ENCODE measurements at regions of chr22 and their contacts with region 1.

Region 1: GRCh38 chr22:23281406-23282088 is 101.2 kb downstream of the BCR start:
- DNase-seq: peak; percentile 91 to 97
- ATAC-seq: peak; percentile 90
- H3K4me3 ChIP-seq: no peak overlapping the region
- H3K27ac ChIP-seq: peak overlapping the region in 1 of 2 donors; percentile 85
- H3K4me1 ChIP-seq: no peaks in the 10 kb centered on the region
- H3K27me3 ChIP-seq: no peaks in the 10 kb centered on the region

Region 2: DNA sequence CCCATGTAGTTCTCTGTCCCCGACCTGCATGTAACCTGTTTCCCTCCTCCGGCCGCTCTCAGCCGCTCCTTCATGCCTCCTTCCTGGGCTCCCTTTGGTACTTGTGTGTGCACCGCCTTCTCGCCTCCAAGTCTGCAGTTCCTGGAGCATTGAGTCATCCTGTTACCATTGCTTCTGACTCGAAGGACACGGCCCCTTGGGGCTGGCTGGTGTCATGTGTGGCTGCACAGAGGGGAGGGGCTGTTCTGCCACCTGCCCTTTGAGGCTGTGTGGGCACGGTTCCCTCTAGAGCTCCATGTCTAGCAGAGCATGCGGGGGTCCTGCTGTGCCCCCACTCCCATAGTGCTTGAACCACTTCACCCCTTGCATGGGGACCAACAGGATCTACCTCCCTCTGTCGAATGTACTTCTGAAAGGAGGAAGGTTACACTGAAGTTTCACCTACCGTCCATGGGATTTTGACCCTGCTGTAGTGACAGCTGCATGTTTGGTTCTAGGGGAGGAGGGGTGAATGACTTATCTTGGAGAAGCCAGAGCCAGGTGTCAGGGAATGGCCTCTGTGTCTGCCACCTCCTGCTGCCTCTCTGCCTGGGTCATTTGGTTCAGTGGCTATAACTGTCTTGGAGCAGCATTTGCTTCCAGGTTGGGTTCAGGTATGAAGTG is 61.6 kb before region 1 on chr22:
- intact Hi-C with region 1: no loop called
- DNase-seq: peak; percentile 75 to 83
- ATAC-seq: peak; percentile 23
- H3K4me3 ChIP-seq: no peak overlapping the region
- H3K27ac ChIP-seq: no peak overlapping the region
- H3K4me1 ChIP-seq: peaks cover 4 to 8% of the 10 kb centered on the region in 2 donors
- H3K27me3 ChIP-seq: no peaks in the 10 kb centered on the region

Region 3: GRCh38 chr22:23353004-23353403 is 71.5 kb after region 1 on chr22:
- intact Hi-C with region 1: no loop called
- DNase-seq: no peak
- ATAC-seq: no peak
- H3K4me3 ChIP-seq: no peak overlapping the region
- H3K27ac ChIP-seq: no peak overlapping the region
- H3K4me1 ChIP-seq: no peaks in the 10 kb centered on the region
- H3K27me3 ChIP-seq: no peaks in the 10 kb centered on the region

Region 4: GRCh38 chr22:23386245-23386631 is 104.7 kb after region 1 on chr22:
- intact Hi-C with region 1: no loop called
- DNase-seq: peak; percentile 40 to 61
- ATAC-seq: no peak
- H3K4me3 ChIP-seq: no peak overlapping the region
- H3K27ac ChIP-seq: no peak overlapping the region
- H3K4me1 ChIP-seq: no peaks in the 10 kb centered on the region
- H3K27me3 ChIP-seq: no peaks in the 10 kb centered on the region

Region 5: DNA sequence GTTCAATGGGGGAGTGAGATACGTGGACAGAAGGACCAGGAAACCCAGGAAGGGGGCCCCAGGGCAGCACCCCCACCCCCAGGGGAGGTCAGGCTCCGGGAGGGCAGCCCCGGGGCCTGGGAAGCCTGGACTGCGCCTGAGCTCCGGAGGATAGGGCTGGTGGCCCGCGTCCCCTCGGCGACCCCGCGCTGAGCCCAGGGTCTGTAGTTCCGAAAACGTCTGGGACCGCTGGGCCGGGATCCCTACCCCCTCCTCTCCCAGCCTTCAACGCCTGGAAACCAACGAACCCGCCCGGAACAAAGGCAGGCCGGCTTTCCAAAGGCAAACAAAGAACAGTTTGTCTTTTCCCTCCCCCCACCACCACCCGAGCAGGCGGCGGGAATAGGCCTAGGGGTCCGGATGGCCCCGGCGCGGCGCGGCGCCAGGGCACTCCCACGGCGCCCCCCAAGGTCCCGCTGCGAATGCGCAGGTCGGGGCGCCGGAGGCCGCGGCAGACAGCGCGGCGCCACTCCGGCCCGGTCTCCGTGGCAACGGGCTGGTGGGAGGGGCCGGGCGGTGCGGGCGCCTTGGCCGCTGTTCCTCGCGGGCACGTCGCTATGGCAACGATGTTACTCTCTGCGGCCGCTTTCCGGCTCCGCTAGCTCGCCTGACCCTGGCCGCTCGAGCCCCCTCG is 240.0 kb after region 1 on chr22:
- intact Hi-C with region 1: loop called in 1 of 2 experiments (anchors 10 kb)
- DNase-seq: peak; percentile 95 to 96
- ATAC-seq: peak; percentile 95
- H3K4me3 ChIP-seq: peak overlapping the region; percentile 29 to 31
- H3K27ac ChIP-seq: peak overlapping the region; percentile 83 to 90
- H3K4me1 ChIP-seq: peaks cover 0 to 4% of the 10 kb centered on the region in 2 donors
- H3K27me3 ChIP-seq: no peaks in the 10 kb centered on the region